Left ventricle myocardium superior (tissue), 1 donor: ENCODE measurements at regions of chr12 and their contacts with region 1.

Region 1: GRCh38 chr12:110449799-110450497 is at the start of gene ARPC3:
- DNase-seq: peak; percentile 97
- ATAC-seq: peak; percentile 99
- total RNA-seq, gene ARPC3: 82.3 TPM

Region 2: GRCh38 chr12:110888256-110888991 is 438.5 kb after region 1 on chr12:
- intact Hi-C with region 1: loop called (anchors 5 kb)
- DNase-seq: no peak
- ATAC-seq: no peak